Endothelial cell of umbilical vein (primary cell): ENCODE measurements at regions of chr11 and their contacts with region 1.

Region 1: DNA sequence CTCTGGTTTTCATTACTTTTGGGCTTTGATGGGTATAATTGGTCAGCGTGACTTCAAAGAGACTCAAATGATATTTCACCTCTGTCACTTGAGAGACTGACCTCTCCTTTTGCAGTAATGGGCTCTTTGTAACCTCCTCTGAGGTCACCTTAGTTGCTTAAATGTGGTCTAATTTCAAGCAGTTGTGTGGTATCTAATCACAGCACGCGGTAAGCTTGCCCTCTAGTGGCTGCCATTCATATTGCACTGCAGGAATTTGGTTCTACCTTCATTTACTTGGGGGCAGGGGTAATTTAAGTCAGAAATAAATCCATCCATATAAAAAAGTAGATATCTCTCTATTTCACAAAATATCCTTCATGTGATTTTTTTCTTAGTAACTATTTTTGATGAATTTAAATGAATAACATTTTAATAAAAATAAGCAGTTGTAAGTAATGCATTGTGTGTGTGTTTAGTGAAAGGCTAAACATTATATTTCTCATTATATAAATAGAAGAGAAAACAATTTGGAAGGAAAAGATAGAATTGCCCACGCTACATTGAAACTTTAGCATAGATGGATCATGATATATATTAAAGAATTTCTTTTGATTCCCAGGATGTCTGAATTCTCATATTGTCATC is 55.0 kb upstream of the ANO3 start:
- DNase-seq: peak; percentile 87
- H3K4me3 ChIP-seq: no peak overlapping the region
- H3K27ac ChIP-seq: no peak overlapping the region
- H3K4me1 ChIP-seq: peaks cover 3% of the 10 kb centered on the region
- H3K27me3 ChIP-seq: no peaks in the 10 kb centered on the region
- CTCF ChIP-seq: peak; percentile 82 to 89
- POLR2A ChIP-seq: no peak

Region 2: DNA sequence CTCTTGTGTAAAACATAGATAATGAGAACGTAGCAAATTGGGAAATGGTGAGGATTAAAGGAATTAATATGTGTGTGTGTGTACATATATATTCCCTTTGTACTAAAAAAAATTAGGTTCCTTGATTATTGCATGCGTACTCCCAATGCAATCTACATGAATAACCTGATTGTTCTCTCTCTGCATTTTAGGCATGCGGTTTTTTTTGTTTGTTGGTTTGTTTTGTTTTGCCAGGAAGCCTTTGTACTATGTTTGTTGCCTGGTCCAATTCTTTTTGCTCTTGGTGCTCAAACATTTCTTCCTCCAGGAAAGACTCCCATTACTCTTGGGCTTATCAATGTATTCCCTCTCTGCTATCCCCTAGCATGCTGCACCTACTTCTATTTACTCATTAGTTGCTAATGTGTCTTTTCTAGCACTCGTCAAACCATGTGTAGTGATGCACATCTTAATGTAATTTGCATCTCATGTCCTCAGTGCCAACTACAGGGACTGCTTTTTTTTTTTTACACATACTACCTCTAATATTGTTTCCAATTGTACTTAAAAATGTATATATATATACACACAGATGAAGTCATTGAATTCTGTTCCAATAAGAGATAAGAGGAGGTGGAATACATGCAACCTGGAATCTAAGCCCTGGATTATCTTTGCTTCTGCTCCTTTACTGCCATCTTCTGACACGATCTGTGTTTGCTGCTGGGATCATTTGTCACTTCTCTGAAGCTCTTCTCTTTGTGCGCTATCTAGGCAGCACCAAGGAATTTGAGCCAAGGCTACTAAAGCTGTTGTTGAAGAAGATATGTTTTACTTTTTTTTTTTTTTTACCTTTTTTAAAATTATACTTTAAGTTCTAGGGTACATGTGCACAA is 142.2 kb before region 1 on chr11:
- CTCF ChIA-PET with region 1: no interaction called
- POLR2A ChIA-PET with region 1: no interaction called
- dilution Hi-C with region 1: no loop called
- intact Hi-C with region 1: loop called (anchors 5 kb)
- DNase-seq: peak; percentile 7
- H3K4me3 ChIP-seq: no peak overlapping the region
- H3K27ac ChIP-seq: no peak overlapping the region
- H3K4me1 ChIP-seq: no peaks in the 10 kb centered on the region
- H3K27me3 ChIP-seq: no peaks in the 10 kb centered on the region
- CTCF ChIP-seq: no peak
- POLR2A ChIP-seq: no peak

Region 3: DNA sequence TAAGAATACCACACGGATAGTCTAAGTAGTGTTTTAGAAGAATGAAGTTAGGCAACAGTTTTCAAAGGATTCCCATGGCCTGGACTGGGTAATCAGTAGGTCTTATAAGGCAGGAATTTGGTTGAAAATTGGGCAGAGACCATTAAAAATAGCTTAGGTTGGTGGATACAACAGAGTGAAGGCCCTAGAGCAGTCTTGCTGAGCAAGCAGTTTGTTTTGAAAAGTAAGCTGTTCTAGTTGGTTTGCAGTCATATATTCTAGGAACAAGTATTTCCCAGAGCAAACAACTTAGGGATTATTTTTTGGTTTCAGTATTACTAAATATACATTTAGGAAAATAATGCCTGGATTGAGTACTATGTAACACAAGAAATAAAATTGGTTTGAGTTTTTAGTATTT is 230.3 kb after region 1 on chr11:
- CTCF ChIA-PET with region 1: no interaction called
- POLR2A ChIA-PET with region 1: no interaction called
- dilution Hi-C with region 1: no loop called
- intact Hi-C with region 1: no loop called
- DNase-seq: no peak
- H3K4me3 ChIP-seq: no peak overlapping the region
- H3K27ac ChIP-seq: no peak overlapping the region
- H3K4me1 ChIP-seq: no peaks in the 10 kb centered on the region
- H3K27me3 ChIP-seq: no peaks in the 10 kb centered on the region
- CTCF ChIP-seq: no peak
- POLR2A ChIP-seq: no peak